Gastrocnemius medialis (tissue), 4 donors: ENCODE measurements at regions of chr2 and their contacts with region 1.

Region 1: GRCh38 chr2:69138793-69139510 is 126.0 kb downstream of the ANTXR1 start:
- DNase-seq: peak in 1 of 2 donors; percentile 54
- ATAC-seq: peak; percentile 74 to 85
- H3K4me3 ChIP-seq: no peak overlapping the region
- H3K27ac ChIP-seq: no peak overlapping the region
- H3K4me1 ChIP-seq: peaks cover 5 to 16% of the 10 kb centered on the region in 2 donors
- H3K27me3 ChIP-seq: no peaks in the 10 kb centered on the region
- CTCF ChIP-seq: no peak
- POLR2A ChIP-seq: no peak

Region 2: DNA sequence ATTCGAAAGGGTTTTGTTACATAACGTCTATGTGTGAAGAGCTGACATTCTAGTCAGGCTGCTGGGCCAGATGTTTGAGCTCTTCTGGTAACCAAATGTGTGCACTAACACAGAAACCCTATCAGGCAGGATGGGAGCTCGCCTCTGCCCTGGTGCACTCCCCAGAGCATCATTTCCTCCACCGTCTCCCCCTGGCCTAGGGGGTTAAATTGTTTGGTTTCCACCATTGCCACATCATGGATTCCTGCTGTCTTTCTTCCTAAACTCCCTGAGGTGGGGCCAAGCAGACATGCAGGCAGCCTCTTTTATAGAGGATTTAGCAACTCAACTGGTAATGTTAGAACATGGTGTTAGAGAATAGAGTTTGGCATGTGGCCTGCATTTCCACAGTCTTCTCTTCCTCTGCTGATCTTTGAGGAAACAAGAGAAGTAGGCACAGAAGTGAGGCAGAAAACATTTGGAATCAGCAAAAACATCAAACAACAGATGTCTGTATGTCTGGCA is 38.7 kb before region 1 on chr2:
- in situ Hi-C with region 1: no loop called
- intact Hi-C with region 1: loop called (anchors 5 kb)
- DNase-seq: peak; percentile 19 to 52
- ATAC-seq: peak in 1 of 2 donors; percentile 68
- H3K4me3 ChIP-seq: no peak overlapping the region
- H3K27ac ChIP-seq: peak overlapping the region in 2 of 4 donors; percentile 22 to 40
- H3K4me1 ChIP-seq: peaks cover 10 to 24% of the 10 kb centered on the region in 2 donors
- H3K27me3 ChIP-seq: no peaks in the 10 kb centered on the region
- CTCF ChIP-seq: no peak
- POLR2A ChIP-seq: no peak

Region 3: DNA sequence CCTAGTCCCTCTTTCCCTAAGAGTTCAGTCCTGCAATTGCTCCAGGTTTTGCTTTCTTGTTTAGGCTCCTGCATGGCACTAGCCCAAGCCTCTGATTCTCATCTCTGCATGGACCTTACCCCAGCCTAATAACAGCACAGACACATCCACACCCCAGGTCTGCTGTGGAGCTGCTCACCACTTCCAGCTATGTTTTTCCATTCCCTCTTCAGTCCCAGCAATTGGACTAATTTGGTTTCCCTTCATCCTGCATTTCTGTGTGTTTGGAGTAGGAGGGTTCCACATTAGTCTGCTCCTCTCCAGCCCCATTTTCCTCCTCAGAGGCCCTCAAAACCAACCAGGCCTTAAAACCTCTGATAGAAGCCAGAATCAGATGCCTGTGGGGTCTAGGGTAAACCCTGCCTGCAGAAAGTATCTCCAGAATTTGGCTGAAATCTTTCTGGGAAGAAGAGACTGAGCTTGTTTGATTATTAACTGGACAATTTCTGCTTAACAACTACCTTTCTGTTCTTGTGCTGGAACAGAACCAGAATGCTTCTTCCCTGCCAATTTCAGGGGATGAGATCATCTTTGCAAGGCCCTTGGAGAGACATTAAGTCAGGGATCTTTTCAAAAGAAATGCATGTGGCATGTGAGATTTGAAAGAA is 152.2 kb after region 1 on chr2:
- in situ Hi-C with region 1: no loop called
- intact Hi-C with region 1: no loop called
- DNase-seq: no peak
- ATAC-seq: no peak
- H3K4me3 ChIP-seq: no peak overlapping the region
- H3K27ac ChIP-seq: no peak overlapping the region
- H3K4me1 ChIP-seq: peaks cover 0 to 4% of the 10 kb centered on the region in 2 donors
- H3K27me3 ChIP-seq: no peaks in the 10 kb centered on the region
- CTCF ChIP-seq: no peak
- POLR2A ChIP-seq: no peak

Region 4: GRCh38 chr2:69309351-69310110 is 170.6 kb after region 1 on chr2:
- in situ Hi-C with region 1: no loop called
- intact Hi-C with region 1: no loop called
- DNase-seq: no peak
- ATAC-seq: no peak
- H3K4me3 ChIP-seq: no peak overlapping the region
- H3K27ac ChIP-seq: peak overlapping the region in 3 of 4 donors; percentile 10 to 38 (median 35)
- H3K4me1 ChIP-seq: peaks cover 12 to 23% of the 10 kb centered on the region in 2 donors
- H3K27me3 ChIP-seq: peaks cover 13 to 27% (median 19%) of the 10 kb centered on the region in 3 donors
- CTCF ChIP-seq: no peak
- POLR2A ChIP-seq: no peak